Mammary epithelial cell (primary cell): ENCODE measurements at regions of chr3 and their contacts with region 1.

Region 1: GRCh38 chr3:171809821-171810628 is at the start of gene PLD1:
- DNase-seq: peak; percentile 94
- H3K4me3 ChIP-seq: peak within 1 kb of the TSS; percentile 51 to 86 (median 82)
- H3K27ac ChIP-seq: peak within 1 kb of the TSS; percentile 92
- H3K4me1 ChIP-seq: peaks cover 39% of the 10 kb centered on the region
- H3K27me3 ChIP-seq: no peaks in the 10 kb centered on the region
- CTCF ChIP-seq: peak in 1 of 2 donors; percentile 6
- total RNA-seq, gene PLD1: 13.9 to 19.0 TPM

Region 2: GRCh38 chr3:171753665-171754408 is 56.2 kb before region 1 on chr3:
- CTCF ChIA-PET with region 1: interaction called, 3 read pairs
- dilution Hi-C with region 1: no loop called
- in situ Hi-C with region 1: no loop called
- intact Hi-C with region 1: loop called (anchors 1 kb)
- DNase-seq: peak; percentile 95
- H3K4me3 ChIP-seq: peak overlapping the region in 1 of 3 experiments; percentile 9
- H3K27ac ChIP-seq: peak overlapping the region; percentile 94
- H3K4me1 ChIP-seq: peaks cover 40% of the 10 kb centered on the region
- H3K27me3 ChIP-seq: no peaks in the 10 kb centered on the region
- CTCF ChIP-seq: no peak

Region 3: GRCh38 chr3:171790898-171791694 is 18.9 kb before region 1 on chr3:
- CTCF ChIA-PET with region 1: no interaction called
- dilution Hi-C with region 1: no loop called
- in situ Hi-C with region 1: no loop called
- intact Hi-C with region 1: loop called (anchors 1 kb)
- DNase-seq: no peak
- H3K4me3 ChIP-seq: no peak overlapping the region
- H3K27ac ChIP-seq: peak overlapping the region; percentile 99
- H3K4me1 ChIP-seq: peaks cover 49% of the 10 kb centered on the region
- H3K27me3 ChIP-seq: no peaks in the 10 kb centered on the region
- CTCF ChIP-seq: no peak

Region 4: DNA sequence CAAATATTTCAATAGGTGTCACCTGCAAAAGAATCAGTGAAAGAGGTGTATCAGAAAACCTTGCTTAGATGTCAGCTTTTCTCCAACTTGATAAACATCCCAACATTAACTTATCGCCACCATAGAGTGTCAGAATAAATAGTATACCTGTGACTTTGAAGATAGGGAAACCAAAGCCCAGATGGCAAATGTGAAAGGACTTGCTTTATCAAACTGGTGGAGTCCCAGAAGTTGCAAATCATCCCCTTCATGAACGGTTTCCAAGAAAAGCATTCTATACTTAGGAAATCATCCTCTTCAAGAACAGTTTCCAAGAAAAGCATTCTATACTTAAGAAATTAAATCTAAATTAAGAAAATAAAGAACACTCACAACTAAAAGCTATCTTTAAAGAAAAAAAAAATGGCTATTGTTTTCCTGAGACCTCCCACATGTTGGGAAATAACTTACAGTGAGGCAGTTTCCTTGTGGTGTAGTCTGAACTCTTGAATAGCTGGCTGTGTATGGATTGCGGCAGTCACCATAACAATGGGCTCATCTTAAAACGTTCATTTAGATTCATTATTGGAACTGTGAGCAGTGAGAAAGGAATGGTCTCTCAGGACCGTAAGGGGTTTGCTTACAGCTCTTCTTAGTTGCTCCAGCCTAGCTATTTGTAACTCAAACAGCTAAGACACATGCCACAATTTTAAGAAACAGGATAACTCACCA is 581.7 kb after region 1 on chr3:
- CTCF ChIA-PET with region 1: no interaction called
- dilution Hi-C with region 1: no loop called
- in situ Hi-C with region 1: no loop called
- intact Hi-C with region 1: no loop called
- DNase-seq: peak; percentile 27
- H3K4me3 ChIP-seq: no peak overlapping the region
- H3K27ac ChIP-seq: no peak overlapping the region
- H3K4me1 ChIP-seq: no peaks in the 10 kb centered on the region
- H3K27me3 ChIP-seq: no peaks in the 10 kb centered on the region
- CTCF ChIP-seq: no peak